Activated CD4-positive, alpha-beta memory T cell treated with anti-CD3 and anti-CD28 coated beads, Interleukin-2, amount 10 ng/mL, durations not matched to agents 7 days and 5 days (primary cell): ENCODE measurements at regions of chr19 and their contacts with region 1.

Region 1: DNA sequence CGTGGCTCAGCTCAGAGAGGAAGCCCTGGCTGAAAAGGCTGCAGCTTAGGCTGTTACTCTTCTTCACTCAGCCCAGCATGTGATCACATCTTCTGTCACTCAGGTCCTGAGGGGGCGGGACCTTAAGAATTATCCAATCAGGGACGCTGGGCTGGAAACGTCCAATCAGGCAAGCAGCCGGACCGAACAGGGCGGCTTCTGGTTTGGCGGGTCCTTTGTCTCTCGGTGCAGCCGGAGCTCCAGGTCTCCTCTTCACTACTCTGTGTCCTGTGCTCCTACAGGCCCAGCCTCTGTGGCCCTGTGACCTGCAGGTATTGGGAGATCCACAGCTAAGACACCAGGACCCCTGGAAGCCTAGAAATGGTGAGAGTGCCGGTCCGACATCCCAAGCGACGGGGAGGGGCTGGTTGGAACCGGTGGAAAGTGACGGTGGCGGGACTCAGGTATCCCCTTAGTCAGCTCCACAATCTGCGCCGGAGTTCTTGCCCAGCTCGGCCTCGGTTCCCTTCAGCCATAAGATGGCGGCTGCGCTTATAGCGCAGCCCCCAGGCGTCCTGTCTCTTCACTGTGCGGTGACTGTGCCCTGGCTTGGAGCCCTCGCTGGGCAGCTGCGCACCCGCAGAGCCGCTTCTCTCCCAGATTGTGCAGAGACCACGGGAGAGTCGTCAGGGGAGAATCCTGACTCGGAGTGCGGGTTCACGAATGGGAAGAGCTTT is at the start of gene ZNF93:
- DNase-seq: peak; percentile 93
- H3K4me3 Mint-ChIP-seq: peak within 1 kb of the TSS; percentile 96
- H3K27ac Mint-ChIP-seq: peak within 1 kb of the TSS; percentile 93
- H3K4me1 Mint-ChIP-seq: peaks cover 31% of the 10 kb centered on the region
- H3K27me3 Mint-ChIP-seq: no peaks in the 10 kb centered on the region
- total RNA-seq, gene ZNF93: 11.4 to 11.7 TPM

Region 2: GRCh38 chr19:19732579-19733501 is 168.0 kb before region 1 on chr19 and contains the start of gene ZNF14:
- CTCF ChIA-PET with region 1: no interaction called
- POLR2A ChIA-PET with region 1: interaction called, 13 read pairs
- DNase-seq: peak; percentile 92
- H3K4me3 Mint-ChIP-seq: peak within 1 kb of the TSS; percentile 100
- H3K27ac Mint-ChIP-seq: peak within 1 kb of the TSS; percentile 89
- H3K4me1 Mint-ChIP-seq: peaks cover 20% of the 10 kb centered on the region
- H3K27me3 Mint-ChIP-seq: no peaks in the 10 kb centered on the region
- total RNA-seq, gene ZNF14: 8.0 to 8.4 TPM

Region 3: GRCh38 chr19:19821366-19821951 is 79.4 kb before region 1 on chr19 and contains the start of gene ZNF506:
- CTCF ChIA-PET with region 1: no interaction called
- POLR2A ChIA-PET with region 1: interaction called, 37 read pairs
- DNase-seq: peak; percentile 96
- H3K4me3 Mint-ChIP-seq: peak within 1 kb of the TSS; percentile 99
- H3K27ac Mint-ChIP-seq: peak within 1 kb of the TSS; percentile 99
- H3K4me1 Mint-ChIP-seq: peaks cover 29% of the 10 kb centered on the region
- H3K27me3 Mint-ChIP-seq: no peaks in the 10 kb centered on the region
- total RNA-seq, gene ZNF506: 24.6 to 25.5 TPM